ENCODE measurements at regions of chr13 and their contacts with region 1.

Region 1: DNA sequence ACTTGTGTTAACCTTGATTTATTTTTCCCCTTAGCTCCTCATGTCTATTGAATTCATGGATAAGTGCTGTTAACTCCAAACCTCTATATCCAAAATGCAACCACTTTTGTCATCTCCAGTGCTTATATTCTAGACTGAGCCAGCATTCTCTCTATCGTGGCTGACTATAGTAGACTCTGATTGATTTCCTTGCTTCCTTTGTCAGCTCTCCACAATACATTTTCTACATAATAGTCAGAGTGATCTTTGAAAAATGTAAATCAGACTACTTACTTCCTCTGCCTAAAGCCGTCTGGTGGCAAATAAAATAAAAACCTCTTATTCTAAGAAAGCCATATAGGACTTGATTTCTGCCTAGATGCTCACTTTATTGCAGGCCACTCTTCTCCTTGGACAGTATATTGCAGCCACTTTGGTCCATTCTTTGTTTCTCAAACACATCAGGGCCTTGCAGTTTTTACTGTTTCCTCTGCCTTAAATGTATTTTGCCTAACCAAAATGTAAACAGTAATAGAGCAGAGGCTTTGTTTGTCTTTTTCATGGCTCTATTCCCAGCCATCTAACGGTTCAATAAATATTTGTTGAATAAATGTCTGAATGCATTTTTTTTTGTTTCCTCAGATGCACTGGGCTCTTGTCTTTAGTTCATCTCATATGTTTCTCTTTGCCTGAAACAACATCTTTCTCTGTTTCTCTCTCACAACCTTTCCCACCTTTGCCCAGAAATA is 243.6 kb upstream of the CSNK1A1L start:
- DNase-seq: no peak
- H3K4me3 Mint-ChIP-seq: no peak overlapping the region
- H3K27ac Mint-ChIP-seq: no peak overlapping the region
- H3K4me1 Mint-ChIP-seq: no peaks in the 10 kb centered on the region
- H3K27me3 Mint-ChIP-seq: no peaks in the 10 kb centered on the region
- CTCF ChIP-seq: no peak

Region 2: DNA sequence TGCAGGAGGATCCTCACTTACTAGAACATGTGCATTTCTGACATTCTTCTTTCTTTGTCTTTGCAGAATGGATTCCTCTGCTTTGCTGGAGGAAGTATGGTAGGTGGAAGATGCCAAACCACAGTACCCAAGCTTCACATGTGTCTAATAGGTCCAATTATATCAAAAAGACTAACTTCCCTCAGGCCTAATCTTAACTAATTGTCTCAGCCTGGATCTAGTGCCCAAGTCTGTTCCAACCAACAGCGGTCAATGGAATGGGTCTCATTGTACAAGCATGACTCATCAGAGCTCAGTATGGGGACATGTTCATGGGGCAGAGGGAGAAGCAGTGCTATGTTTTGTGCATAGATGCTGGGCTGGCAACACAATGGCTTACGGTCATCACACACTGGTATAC is 162.0 kb before region 1 on chr13:
- CTCF ChIA-PET with region 1: no interaction called
- POLR2A ChIA-PET with region 1: no interaction called
- intact Hi-C with region 1: no loop called
- DNase-seq: peak; percentile 28
- H3K4me3 Mint-ChIP-seq: no peak overlapping the region
- H3K27ac Mint-ChIP-seq: no peak overlapping the region
- H3K4me1 Mint-ChIP-seq: no peaks in the 10 kb centered on the region
- H3K27me3 Mint-ChIP-seq: no peaks in the 10 kb centered on the region
- CTCF ChIP-seq: no peak

Region 3: DNA sequence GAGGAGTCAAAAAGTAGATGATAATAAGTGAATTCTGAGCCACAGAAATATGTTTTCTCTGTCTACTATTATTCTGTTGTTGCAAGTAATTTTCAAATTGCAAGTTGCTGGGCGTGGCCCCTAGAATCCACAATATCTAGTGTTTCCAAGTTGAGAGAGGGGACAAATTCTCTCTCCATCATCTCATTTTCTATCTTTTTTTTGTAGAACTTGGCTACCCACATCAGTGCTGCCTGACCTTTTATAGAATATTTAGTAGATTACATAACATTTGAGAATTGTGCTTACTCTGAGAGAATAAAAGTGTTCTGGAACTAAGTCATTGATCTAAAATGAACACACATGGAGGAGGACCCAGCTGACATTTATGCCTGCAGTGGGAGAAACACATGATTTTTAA is 132.7 kb before region 1 on chr13:
- CTCF ChIA-PET with region 1: no interaction called
- POLR2A ChIA-PET with region 1: no interaction called
- intact Hi-C with region 1: no loop called
- DNase-seq: no peak
- H3K4me3 Mint-ChIP-seq: no peak overlapping the region
- H3K27ac Mint-ChIP-seq: no peak overlapping the region
- H3K4me1 Mint-ChIP-seq: no peaks in the 10 kb centered on the region
- H3K27me3 Mint-ChIP-seq: no peaks in the 10 kb centered on the region
- CTCF ChIP-seq: no peak

Region 4: DNA sequence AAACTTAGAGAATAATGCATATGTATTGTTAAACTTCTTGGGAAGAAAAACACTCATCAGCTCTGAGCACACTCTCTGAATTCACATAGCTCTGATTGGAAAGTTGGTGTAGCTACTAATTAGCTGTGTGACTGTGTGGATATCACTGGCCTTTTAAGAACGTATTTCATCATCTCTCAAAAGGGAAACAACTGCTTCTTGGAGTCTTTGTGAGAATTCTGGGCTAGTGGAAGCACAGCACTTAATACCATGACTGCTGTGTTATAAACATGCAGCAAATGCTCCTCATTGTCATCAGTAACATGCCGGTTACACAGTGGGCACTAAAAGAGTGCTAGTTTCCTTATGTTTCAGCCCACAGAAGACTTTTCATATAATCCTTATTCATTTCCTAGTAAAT is 22.7 kb before region 1 on chr13:
- CTCF ChIA-PET with region 1: no interaction called
- POLR2A ChIA-PET with region 1: interaction called, 3 read pairs
- intact Hi-C with region 1: loop called (anchors 1 kb)
- DNase-seq: no peak
- H3K4me3 Mint-ChIP-seq: no peak overlapping the region
- H3K27ac Mint-ChIP-seq: no peak overlapping the region
- H3K4me1 Mint-ChIP-seq: no peaks in the 10 kb centered on the region
- H3K27me3 Mint-ChIP-seq: no peaks in the 10 kb centered on the region
- CTCF ChIP-seq: no peak